Activated CD4-positive, alpha-beta memory T cell treated with anti-CD3 and anti-CD28 coated beads for 36 hours (primary cell): ENCODE measurements at regions of chr10 and their contacts with region 1.

Region 1: GRCh38 chr10:42866115-42866995 is 83.8 kb downstream of the BMS1 start:
- DNase-seq: peak; percentile 68
- H3K4me3 Mint-ChIP-seq: no peak overlapping the region
- H3K27ac Mint-ChIP-seq: no peak overlapping the region
- H3K4me1 Mint-ChIP-seq: peaks cover 2% of the 10 kb centered on the region
- H3K27me3 Mint-ChIP-seq: peaks cover 26% of the 10 kb centered on the region

Region 2: DNA sequence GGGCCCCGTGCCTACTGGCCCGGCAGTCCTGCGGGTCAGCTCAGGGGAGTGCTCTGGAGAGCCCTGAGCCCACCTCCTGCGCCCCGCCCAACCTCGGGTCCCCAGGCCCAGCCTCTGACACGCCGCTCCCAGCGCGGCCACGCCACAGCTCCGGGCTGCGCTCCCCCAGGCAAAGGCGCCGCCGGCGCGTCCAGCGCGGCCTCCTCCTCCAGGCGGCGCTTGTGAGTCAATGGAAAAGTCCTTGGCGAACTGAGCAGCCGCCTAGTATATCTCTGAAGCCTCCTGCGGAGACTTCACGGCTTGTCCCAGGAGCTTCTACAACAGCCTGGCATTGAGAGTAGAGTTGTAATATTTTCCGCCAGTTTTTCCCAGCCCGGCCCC is 113.2 kb before region 1 on chr10:
- CTCF ChIA-PET with region 1: no interaction called
- POLR2A ChIA-PET with region 1: no interaction called
- intact Hi-C with region 1: loop called (anchors 10 kb)
- DNase-seq: peak; percentile 82
- H3K4me3 Mint-ChIP-seq: peak overlapping the region; percentile 66
- H3K27ac Mint-ChIP-seq: no peak overlapping the region
- H3K4me1 Mint-ChIP-seq: peaks cover 6% of the 10 kb centered on the region
- H3K27me3 Mint-ChIP-seq: peaks cover 44% of the 10 kb centered on the region

Region 3: GRCh38 chr10:42940487-42941294 is 74.3 kb after region 1 on chr10:
- CTCF ChIA-PET with region 1: no interaction called
- POLR2A ChIA-PET with region 1: no interaction called
- intact Hi-C with region 1: no loop called
- DNase-seq: no peak
- H3K4me3 Mint-ChIP-seq: no peak overlapping the region
- H3K27ac Mint-ChIP-seq: no peak overlapping the region
- H3K4me1 Mint-ChIP-seq: no peaks in the 10 kb centered on the region
- H3K27me3 Mint-ChIP-seq: peaks cover 2% of the 10 kb centered on the region

Region 4: GRCh38 chr10:43078987-43079275 is 212.6 kb after region 1 on chr10:
- CTCF ChIA-PET with region 1: no interaction called
- POLR2A ChIA-PET with region 1: no interaction called
- intact Hi-C with region 1: loop called (anchors 10 kb)
- DNase-seq: peak; percentile 42
- H3K4me3 Mint-ChIP-seq: no peak overlapping the region
- H3K27ac Mint-ChIP-seq: no peak overlapping the region
- H3K4me1 Mint-ChIP-seq: peaks cover 6% of the 10 kb centered on the region
- H3K27me3 Mint-ChIP-seq: peaks cover 30% of the 10 kb centered on the region

Region 5: GRCh38 chr10:43105102-43105785 is 238.9 kb after region 1 on chr10:
- CTCF ChIA-PET with region 1: interaction called, 9 read pairs
- POLR2A ChIA-PET with region 1: no interaction called
- intact Hi-C with region 1: loop called (anchors 1 kb)
- DNase-seq: peak; percentile 85
- H3K4me3 Mint-ChIP-seq: peak overlapping the region; percentile 60
- H3K27ac Mint-ChIP-seq: no peak overlapping the region
- H3K4me1 Mint-ChIP-seq: peaks cover 6% of the 10 kb centered on the region
- H3K27me3 Mint-ChIP-seq: peaks cover 16% of the 10 kb centered on the region

Region 6: DNA sequence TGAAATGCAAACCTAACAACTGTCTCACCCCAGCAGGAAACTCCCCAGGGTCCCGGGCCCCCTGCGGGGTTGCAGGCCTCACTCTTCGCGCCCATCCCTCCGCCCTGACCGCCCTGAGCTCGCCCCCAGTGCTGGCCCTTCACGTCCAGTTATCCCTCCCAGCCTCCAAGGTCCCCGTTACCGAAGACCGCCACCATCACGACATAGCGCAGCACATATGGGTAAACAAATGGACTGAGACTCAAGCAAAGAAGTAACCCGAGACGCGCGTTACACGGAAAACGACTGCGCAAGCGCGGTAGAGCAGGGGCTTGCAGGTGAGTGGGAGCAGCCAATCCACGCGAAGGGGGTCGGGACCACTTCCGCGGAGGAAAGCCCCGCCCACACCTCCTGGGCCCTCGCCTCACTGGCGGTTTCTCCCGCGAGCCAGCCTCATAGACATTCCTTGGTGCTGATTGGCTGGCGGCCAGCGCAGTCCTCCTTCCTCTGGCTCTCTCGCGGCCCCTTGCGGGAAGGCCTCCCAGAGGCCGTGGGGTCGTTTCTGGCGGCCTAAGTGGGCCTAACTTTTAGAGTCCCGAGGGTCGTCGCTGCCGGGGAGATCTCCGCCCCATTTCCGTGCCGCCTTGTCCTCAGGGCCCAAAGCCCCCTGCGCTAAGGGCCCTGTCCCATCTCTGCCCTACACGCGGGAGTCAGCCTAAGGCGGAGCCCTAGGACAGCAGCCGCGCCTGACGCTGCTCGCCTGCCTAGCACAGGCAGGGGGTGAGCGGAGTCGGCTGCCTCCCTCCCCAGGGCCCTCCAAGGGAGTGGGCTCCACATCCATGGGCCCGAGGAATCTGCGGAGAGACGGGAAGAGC is 495.9 kb after region 1 on chr10:
- CTCF ChIA-PET with region 1: no interaction called
- POLR2A ChIA-PET with region 1: no interaction called
- intact Hi-C with region 1: loop called (anchors 10 kb)
- DNase-seq: peak; percentile 99
- H3K4me3 Mint-ChIP-seq: peak overlapping the region; percentile 98
- H3K27ac Mint-ChIP-seq: peak overlapping the region; percentile 98
- H3K4me1 Mint-ChIP-seq: peaks cover 20% of the 10 kb centered on the region
- H3K27me3 Mint-ChIP-seq: no peaks in the 10 kb centered on the region

Region 7: GRCh38 chr10:43461950-43462349 is 595.6 kb after region 1 on chr10:
- CTCF ChIA-PET with region 1: no interaction called
- POLR2A ChIA-PET with region 1: no interaction called
- intact Hi-C with region 1: loop called (anchors 5 kb)
- DNase-seq: no peak
- H3K4me3 Mint-ChIP-seq: no peak overlapping the region
- H3K27ac Mint-ChIP-seq: peak overlapping the region; percentile 54
- H3K4me1 Mint-ChIP-seq: peaks cover 18% of the 10 kb centered on the region
- H3K27me3 Mint-ChIP-seq: no peaks in the 10 kb centered on the region